Posterior cingulate gyrus (tissue), 11 donors: ENCODE measurements at regions of chr19 and their contacts with region 1.

Region 1: DNA sequence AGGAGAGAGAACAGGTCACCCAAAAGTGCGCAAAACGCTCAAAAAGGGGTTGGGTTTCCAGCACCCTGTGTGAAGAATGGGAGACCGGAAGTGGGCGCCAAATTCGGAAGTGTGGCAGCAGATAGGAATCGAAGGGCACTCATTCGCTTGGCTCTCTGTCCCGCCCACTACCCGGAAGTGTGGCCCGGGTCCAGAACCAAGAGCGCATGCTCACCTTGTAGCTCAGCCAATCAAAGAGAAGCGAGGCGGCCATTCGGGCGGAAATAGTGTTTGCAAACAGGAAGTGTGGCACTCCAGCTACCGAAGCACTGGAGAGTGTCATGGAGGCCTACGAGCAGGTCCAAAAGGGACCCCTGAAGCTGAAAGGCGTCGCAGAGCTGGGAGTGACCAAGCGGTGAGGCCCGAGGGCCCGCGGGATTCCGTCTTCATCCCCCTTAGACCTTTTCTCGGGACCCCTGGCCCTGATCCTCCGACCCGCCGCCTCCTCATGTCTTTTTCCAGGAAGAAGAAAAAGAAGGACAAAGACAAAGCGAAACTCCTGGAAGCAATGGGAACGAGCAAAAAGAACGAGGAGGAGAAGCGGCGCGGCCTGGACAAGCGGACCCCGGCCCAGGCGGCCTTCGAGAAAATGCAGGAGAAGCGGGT is at the start of gene FAM32A:
- DNase-seq: peak; percentile 94 to 99 (median 98)

Region 2: DNA sequence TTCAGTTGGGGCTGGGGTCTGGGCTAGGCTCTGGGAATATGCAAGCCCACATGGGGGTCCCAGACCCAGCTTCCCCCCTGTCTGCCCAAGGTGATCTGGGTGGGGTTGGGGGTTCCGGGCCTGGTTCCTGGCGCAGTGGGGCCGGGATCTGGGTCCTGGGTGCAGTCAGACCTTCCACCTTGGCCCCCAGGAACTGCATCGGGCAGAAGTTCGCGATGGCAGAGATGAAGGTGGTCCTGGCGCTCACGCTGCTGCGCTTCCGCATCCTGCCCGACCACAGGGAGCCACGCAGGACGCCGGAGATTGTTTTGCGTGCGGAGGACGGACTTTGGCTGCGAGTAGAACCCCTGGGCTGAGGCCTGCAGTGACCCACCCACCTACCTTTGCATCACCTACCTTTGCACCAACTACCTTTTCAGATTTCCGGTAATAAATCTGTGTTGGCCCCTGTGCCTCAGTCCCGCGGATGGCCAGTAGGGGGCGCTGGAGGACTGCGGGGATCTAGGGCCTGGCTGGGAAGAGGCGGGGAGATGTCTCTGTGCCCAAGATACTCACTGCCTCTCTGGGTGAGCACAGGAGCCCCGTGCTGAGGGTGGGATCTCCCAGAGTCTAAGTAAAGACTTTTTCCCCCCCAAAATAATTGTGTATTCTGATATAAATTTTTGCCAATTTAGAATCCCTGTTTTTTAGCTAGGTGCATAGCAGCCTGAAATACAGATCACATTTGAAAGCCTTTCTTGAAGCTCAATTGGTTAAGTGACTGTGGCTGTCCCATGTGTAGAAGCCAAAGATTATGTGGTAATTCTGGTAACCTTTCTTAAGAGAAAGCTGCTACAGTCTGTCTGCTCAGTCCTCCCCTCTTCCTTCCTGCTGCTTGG is 556.0 kb before region 1 on chr19:
- intact Hi-C with region 1: loop called (anchors 1 kb)
- DNase-seq: peak; percentile 51 to 97 (median 82)

Region 3: GRCh38 chr19:16041299-16041990 is 143.8 kb before region 1 on chr19:
- intact Hi-C with region 1: loop called (anchors 1 kb)
- DNase-seq: peak; percentile 59 to 97 (median 86)

Region 4: DNA sequence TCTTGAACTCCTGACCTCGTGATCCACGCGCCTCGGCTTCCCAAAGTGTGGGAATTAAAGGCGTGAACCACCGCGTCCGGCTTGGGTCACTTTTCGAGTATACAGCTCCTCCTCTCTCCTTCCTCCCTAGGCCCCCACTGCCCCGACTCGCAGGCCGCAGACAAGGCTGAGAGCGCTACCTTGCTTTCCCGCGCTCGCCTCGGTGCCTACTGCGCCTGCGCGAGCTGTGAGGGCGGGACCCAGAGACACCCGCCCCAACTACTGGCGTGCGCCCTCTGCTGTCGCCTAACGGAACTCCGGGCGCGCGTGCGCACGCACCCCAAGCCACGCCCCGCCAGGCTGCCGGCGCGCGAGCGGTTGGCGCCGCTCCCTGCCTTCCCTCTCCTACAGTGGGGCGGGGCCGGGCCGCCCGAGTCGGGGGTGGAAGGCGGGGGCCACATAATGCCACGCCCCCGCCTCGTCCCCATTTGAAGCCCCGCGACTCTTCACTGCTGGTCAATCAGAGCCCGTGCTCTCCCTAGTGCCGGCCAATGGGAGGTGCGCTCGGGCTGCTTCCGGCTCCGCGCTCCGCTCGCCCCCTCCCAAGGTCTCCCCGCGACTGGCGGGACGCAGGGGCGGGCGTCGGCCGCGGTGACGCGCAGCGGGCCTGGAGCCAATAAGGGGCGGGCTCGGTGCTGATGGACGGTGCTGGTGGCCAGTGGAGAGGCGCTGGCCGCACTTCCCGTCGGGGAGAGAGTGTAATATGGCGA is 73.9 kb before region 1 on chr19 and contains the start of gene RAB8A:
- intact Hi-C with region 1: loop called (anchors 1 kb)
- DNase-seq: peak; percentile 97 to 100 (median 99)

Region 5: DNA sequence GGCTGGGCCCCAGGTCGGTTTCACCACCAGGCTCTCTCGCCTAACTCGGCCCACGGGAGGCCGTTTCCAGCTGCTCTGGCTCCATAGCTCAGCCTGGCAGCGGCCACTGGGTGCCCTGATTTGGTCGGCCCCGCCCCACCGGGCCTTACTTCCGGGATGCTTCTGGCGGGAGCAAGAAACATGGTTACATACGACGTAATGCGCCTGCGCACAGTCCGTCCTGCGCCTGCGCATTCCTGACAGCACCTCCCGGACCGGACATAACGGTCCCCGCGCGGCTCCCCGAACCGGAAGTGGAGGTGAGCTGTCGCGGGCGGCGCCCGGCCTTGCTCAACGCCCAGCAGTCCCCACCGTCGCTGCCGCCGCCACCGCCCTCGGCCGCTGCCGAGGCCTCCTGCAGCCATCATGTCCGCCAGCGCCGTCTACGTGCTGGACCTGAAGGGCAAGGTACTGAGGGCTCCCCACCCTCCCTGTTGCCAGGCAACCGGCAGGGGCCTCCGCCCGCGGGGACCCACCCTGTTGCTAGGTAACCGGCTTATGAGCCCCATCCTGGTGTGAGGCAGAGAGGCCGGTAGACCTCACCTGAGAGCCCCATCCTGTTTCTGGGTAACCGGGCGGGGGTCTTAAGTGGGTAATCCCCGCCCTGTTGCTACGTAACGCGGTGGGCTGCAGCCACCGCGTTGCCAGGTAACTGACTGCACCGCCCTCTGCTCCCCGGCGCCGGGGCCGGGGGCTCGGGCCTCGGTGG is 12.6 kb after region 1 on chr19 and contains the start of gene AP1M1:
- intact Hi-C with region 1: loop called (anchors 1 kb)
- DNase-seq: peak; percentile 95 to 100 (median 97)